Activated naive CD4-positive, alpha-beta T cell treated with anti-CD3 and anti-CD28 coated beads for 36 hours (primary cell): ENCODE measurements at regions of chr22 and their contacts with region 1.

Region 1: GRCh38 chr22:25110846-25111578 is 88.6 kb upstream of the CRYBB3 start:
- DNase-seq: peak; percentile 62
- H3K4me3 Mint-ChIP-seq: peak overlapping the region; percentile 75
- H3K27ac Mint-ChIP-seq: no peak overlapping the region
- H3K4me1 Mint-ChIP-seq: peaks cover 25% of the 10 kb centered on the region
- H3K27me3 Mint-ChIP-seq: peaks cover 2% of the 10 kb centered on the region

Region 2: DNA sequence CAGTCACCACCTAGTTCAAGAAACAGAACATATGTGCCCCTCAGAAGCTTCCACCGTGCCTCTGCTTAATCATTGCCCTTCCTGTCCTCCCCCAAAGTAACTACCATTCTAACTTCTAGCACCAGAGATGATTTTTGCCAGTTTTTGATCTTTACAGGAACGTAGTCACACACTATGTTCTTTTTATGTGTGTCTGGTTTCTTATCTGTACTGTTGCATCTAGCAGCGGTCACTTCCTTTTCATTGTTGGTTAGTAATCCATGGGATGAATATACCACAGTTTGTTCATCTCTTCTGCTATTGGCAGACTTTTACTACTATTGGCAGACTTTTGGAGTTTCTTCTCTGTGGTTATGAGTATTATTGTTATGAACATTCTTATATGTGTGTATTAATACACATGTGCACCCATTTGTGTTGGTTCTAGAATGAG is 805.7 kb before region 1 on chr22:
- CTCF ChIA-PET with region 1: no interaction called
- intact Hi-C with region 1: no loop called
- DNase-seq: peak; percentile 33
- H3K4me3 Mint-ChIP-seq: no peak overlapping the region
- H3K27ac Mint-ChIP-seq: peak overlapping the region; percentile 1
- H3K4me1 Mint-ChIP-seq: peaks cover 55% of the 10 kb centered on the region
- H3K27me3 Mint-ChIP-seq: no peaks in the 10 kb centered on the region

Region 3: GRCh38 chr22:24789516-24789915 is 321.5 kb before region 1 on chr22:
- CTCF ChIA-PET with region 1: no interaction called
- intact Hi-C with region 1: no loop called
- DNase-seq: no peak
- H3K4me3 Mint-ChIP-seq: no peak overlapping the region
- H3K27ac Mint-ChIP-seq: no peak overlapping the region
- H3K4me1 Mint-ChIP-seq: no peaks in the 10 kb centered on the region
- H3K27me3 Mint-ChIP-seq: no peaks in the 10 kb centered on the region

Region 4: DNA sequence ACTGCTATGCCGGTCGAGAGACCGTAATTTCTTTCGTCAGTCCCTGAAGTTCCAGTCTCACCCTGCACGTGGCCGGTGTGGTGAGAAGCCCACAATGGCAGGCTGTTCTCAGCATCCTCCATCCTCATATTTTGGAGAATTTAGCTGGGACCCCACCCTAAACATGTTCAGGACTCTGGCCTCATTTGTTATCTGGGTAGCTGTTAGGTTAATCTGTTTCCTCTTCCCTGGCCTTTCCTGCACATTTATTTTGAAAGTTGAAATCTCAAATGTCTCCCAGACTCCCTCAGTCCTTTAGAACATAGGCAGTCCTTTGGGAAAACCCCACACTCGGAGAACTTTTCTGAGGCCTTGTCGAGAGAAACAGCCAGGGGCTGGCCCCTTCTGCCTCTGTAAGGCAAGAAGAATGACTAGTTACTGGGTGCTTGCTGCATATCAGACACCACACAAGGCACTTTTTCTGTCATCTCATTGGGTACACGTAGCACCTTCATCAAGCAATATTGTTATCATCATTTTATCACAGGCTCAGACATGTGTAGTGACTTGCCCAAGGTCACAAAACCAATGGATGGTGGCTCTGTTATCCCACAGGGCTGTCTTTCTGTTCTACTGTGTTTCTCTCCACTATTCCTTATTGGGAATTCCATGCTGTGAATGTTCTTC is 20.7 kb before region 1 on chr22:
- CTCF ChIA-PET with region 1: interaction called, 4 read pairs
- intact Hi-C with region 1: loop called (anchors 1 kb)
- DNase-seq: peak; percentile 56
- H3K4me3 Mint-ChIP-seq: no peak overlapping the region
- H3K27ac Mint-ChIP-seq: peak overlapping the region; percentile 44
- H3K4me1 Mint-ChIP-seq: peaks cover 33% of the 10 kb centered on the region
- H3K27me3 Mint-ChIP-seq: no peaks in the 10 kb centered on the region